CD8-positive, alpha-beta memory T cell (primary cell): ENCODE measurements at regions of chr19 and their contacts with region 1.

Region 1: GRCh38 chr19:49097455-49098288 is 12.4 kb downstream of the SNRNP70 start:
- DNase-seq: peak; percentile 58 to 84 (median 69)
- H3K4me3 ChIP-seq: no peak overlapping the region
- H3K4me3 Mint-ChIP-seq: no peak overlapping the region
- H3K27ac ChIP-seq: no peak overlapping the region
- H3K27ac Mint-ChIP-seq: peak overlapping the region in 2 of 8 donors; percentile 66 to 71
- H3K4me1 ChIP-seq: no peaks in the 10 kb centered on the region
- H3K4me1 Mint-ChIP-seq: peaks cover 9 to 22% (median 14%) of the 10 kb centered on the region in 3 donors
- H3K27me3 ChIP-seq: no peaks in the 10 kb centered on the region
- H3K27me3 Mint-ChIP-seq: no peaks in the 10 kb centered on the region

Region 2: DNA sequence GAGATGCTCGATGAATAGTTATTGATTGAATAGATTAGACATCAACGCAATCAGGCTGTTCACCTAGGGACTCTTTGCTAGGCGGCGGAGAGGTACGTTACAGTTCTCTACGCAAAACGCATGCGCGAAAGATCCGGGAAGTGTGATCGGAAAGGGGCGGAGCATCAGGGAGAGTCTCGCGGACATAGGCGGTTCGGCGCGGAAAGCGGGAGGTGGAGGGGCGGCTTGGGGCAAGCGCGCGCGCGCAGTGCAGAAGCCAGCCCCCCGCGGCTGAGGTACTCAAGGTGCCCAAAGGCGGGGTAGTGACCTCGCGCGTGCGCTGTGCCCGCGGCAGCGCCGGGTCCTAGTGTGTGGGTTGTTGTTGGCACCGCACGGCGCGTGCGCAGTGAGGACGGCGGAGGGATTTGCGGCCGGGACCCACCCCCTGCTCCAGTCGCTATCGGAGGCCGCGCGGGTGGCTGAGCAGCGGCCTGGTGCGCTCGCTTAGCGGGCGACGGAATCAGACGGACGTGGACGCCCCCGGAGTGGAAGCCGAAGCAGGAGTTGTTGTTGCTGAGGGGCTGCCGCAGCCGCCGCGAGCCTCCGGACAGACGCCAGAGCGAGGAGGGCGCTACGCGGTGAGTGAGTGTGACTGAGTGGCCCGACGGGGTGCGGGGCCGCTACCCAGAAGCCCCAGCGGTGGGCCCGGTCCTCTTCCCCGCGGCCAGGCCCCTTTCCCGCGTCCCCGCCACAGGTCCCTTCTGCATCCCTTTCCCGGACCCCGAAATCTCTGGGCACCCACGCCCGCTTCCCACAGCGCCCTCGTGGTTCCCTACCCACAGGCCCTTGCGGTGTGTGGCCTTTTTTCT is 12.4 kb before region 1 on chr19 and contains the start of gene SNRNP70:
- CTCF ChIA-PET with region 1: interaction called, 28 read pairs
- POLR2A ChIA-PET with region 1: no interaction called
- DNase-seq: peak; percentile 99 to 100 (median 100)
- H3K4me3 ChIP-seq: peak within 1 kb of the TSS; percentile 99
- H3K4me3 Mint-ChIP-seq: peak within 1 kb of the TSS; percentile 92 to 96 (median 96)
- H3K27ac ChIP-seq: peak within 1 kb of the TSS; percentile 82
- H3K27ac Mint-ChIP-seq: peak within 1 kb of the TSS; percentile 87 to 97 (median 93)
- H3K4me1 ChIP-seq: peaks cover 24% of the 10 kb centered on the region
- H3K4me1 Mint-ChIP-seq: peaks cover 30 to 48% (median 47%) of the 10 kb centered on the region in 3 donors
- H3K27me3 ChIP-seq: no peaks in the 10 kb centered on the region
- H3K27me3 Mint-ChIP-seq: peaks cover 6 to 11% of the 10 kb centered on the region in 2 donors
- total RNA-seq, gene SNRNP70: 210 to 221 TPM

Region 3: GRCh38 chr19:49127674-49128544 is 30.2 kb after region 1 on chr19:
- CTCF ChIA-PET with region 1: interaction called, 11 read pairs
- POLR2A ChIA-PET with region 1: no interaction called
- DNase-seq: peak; percentile 91 to 95 (median 94)
- H3K4me3 ChIP-seq: peak overlapping the region; percentile 73
- H3K4me3 Mint-ChIP-seq: peak overlapping the region; percentile 64 to 93 (median 91)
- H3K27ac ChIP-seq: peak overlapping the region; percentile 59
- H3K27ac Mint-ChIP-seq: peak overlapping the region in 7 of 8 donors; percentile 8 to 92 (median 89)
- H3K4me1 ChIP-seq: peaks cover 12% of the 10 kb centered on the region
- H3K4me1 Mint-ChIP-seq: peaks cover 11 to 19% (median 17%) of the 10 kb centered on the region in 3 donors
- H3K27me3 ChIP-seq: no peaks in the 10 kb centered on the region
- H3K27me3 Mint-ChIP-seq: peaks cover 0 to 3% of the 10 kb centered on the region in 2 donors

Region 4: GRCh38 chr19:49145573-49146407 is 48.1 kb after region 1 on chr19:
- CTCF ChIA-PET with region 1: interaction called, 39 read pairs
- POLR2A ChIA-PET with region 1: no interaction called
- DNase-seq: peak; percentile 57 to 81 (median 72)
- H3K4me3 ChIP-seq: no peak overlapping the region
- H3K4me3 Mint-ChIP-seq: peak overlapping the region in 2 of 7 donors; percentile 13 to 82
- H3K27ac ChIP-seq: no peak overlapping the region
- H3K27ac Mint-ChIP-seq: no peak overlapping the region
- H3K4me1 ChIP-seq: peaks cover 32% of the 10 kb centered on the region
- H3K4me1 Mint-ChIP-seq: peaks cover 30 to 39% (median 32%) of the 10 kb centered on the region in 3 donors
- H3K27me3 ChIP-seq: peaks cover 33% of the 10 kb centered on the region
- H3K27me3 Mint-ChIP-seq: peaks cover 34 to 58% of the 10 kb centered on the region in 2 donors

Region 5: GRCh38 chr19:49210108-49210900 is 112.6 kb after region 1 on chr19:
- CTCF ChIA-PET with region 1: interaction called, 11 read pairs
- POLR2A ChIA-PET with region 1: interaction called, 3 read pairs
- DNase-seq: peak in 2 of 5 donors; percentile 14 to 34
- H3K4me3 ChIP-seq: no peak overlapping the region
- H3K4me3 Mint-ChIP-seq: peak overlapping the region in 1 of 7 donors; percentile 54
- H3K27ac ChIP-seq: no peak overlapping the region
- H3K27ac Mint-ChIP-seq: peak overlapping the region in 1 of 8 donors; percentile 71
- H3K4me1 ChIP-seq: no peaks in the 10 kb centered on the region
- H3K4me1 Mint-ChIP-seq: peaks cover 9 to 13% (median 12%) of the 10 kb centered on the region in 3 donors
- H3K27me3 ChIP-seq: no peaks in the 10 kb centered on the region
- H3K27me3 Mint-ChIP-seq: peaks cover 9 to 19% of the 10 kb centered on the region in 2 donors